AG04450 (cell line): ENCODE measurements at regions of chr1 and their contacts with region 1.

Region 1: GRCh38 chr1:236603991-236604904 is at the start of gene HEATR1:
- DNase-seq: peak; percentile 91
- H3K4me3 ChIP-seq: peak within 1 kb of the TSS; percentile 98
- H3K27ac ChIP-seq: peak within 1 kb of the TSS; percentile 47
- H3K27me3 ChIP-seq: no peaks in the 10 kb centered on the region
- CTCF ChIP-seq: no peak
- polyA plus RNA-seq, gene HEATR1: 19.3 and 24.9 TPM in 2 replicates

Region 2: DNA sequence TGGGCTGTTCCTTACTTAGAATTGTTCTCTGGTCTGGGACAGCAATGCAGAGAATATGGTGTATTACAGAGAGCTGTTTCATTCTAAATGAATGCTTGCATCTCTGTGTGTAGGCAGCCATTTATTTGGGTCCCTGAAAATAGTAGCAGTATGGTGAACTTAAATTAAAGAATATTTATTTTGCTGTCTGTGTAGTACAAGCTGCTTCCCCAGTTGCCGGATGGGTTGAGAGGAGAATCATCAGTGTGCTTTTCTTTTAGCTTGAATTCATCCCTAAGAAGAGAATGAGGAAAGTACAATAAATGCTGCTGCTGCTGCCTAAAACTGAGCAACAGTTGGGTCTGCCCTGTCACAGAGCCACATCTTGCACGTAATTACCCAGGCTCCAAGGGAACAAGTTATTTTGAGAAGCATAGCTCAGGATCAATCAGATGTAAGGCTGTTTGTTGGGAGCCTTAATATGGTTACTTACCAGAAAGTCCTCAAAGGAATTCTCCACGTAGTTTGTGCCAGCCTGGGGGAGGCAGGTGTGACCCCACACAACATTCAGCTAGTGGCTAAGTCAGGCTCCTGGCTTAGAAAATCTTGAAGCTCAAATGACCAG is 98.6 kb after region 1 on chr1:
- CTCF ChIA-PET with region 1: no interaction called
- POLR2A ChIA-PET with region 1: no interaction called
- DNase-seq: no peak
- H3K4me3 ChIP-seq: no peak overlapping the region
- H3K27ac ChIP-seq: no peak overlapping the region
- H3K27me3 ChIP-seq: no peaks in the 10 kb centered on the region
- CTCF ChIP-seq: no peak

Region 3: DNA sequence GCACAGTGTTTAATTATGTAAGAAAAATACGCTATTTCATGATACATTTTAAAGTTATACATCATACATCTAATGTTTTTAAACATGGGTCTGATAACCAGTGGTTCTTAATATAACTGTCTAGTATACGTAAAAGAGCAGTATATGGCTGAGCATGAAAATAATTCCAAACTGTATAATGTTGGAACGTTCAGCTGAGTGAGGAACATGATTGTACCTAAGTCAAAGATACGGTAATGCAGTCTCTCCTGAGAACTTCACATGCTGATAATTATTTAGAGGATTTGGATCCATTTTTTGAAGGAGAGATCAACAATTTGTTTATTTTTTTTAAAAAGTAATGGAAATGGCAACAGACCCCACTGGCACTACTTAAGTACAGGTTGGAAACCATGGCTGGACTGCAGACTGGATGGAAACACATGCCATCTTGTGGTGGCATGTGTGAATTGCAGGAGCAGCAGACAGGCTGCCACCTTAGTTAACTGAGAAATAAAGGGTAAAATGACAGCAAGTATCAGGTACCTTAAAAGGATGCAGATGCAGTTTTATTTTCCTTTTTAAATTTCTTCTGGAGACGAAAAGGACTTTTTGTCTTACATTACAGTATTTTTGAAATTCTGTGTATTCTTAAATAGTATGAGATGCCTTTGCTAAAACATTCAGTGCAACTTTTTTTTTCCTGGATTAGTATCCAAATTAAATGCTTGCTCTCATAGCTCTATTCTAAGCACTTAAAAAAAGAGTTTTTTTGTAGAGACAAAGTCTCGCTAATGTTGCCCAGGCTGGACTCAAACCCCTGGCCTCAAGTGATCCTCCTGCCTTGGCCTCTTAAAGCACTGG is 264.6 kb after region 1 on chr1:
- CTCF ChIA-PET with region 1: interaction called, 12 read pairs
- POLR2A ChIA-PET with region 1: no interaction called
- DNase-seq: peak; percentile 45
- H3K4me3 ChIP-seq: no peak overlapping the region
- H3K27ac ChIP-seq: no peak overlapping the region
- H3K27me3 ChIP-seq: no peaks in the 10 kb centered on the region
- CTCF ChIP-seq: peak; percentile 98

Region 4: DNA sequence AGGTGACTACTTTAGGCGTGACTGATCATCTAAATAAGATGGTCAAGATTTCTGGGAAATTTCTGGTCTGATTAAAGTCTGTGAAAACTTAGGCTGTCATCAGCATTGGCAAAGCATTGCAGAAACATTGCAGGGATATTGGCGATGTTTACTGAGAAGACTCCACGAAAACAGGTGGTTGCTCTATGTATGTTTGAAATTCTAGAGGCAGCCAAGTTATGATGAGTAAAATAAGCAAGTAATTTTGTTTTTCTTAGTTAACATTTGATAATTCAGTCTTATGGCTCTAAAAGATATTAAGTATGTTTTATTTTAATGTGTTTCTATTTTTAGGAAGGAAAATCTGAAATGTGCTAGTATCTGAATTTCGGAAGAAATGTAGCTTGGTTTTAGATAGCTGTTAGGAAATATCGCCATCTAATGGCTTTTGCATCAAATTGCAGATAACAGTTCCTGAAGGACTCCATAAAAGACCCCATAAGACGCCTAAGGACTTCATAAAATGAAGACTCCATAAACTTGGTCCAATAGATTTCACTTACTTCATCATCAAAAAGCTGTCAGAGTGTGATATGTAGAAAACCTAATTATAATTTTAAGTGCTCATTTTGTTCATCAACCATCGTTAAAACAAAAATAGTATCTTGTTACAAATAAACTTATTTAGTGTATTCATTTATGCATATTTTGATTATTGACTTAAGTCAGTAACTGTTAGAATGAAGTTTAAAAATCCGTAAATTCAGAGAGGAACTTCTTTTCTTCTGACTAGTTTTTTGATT is 782.3 kb after region 1 on chr1:
- CTCF ChIA-PET with region 1: interaction called, 55 read pairs
- POLR2A ChIA-PET with region 1: no interaction called
- DNase-seq: no peak
- H3K4me3 ChIP-seq: no peak overlapping the region
- H3K27ac ChIP-seq: no peak overlapping the region
- H3K27me3 ChIP-seq: no peaks in the 10 kb centered on the region
- CTCF ChIP-seq: peak; percentile 75

Region 5: DNA sequence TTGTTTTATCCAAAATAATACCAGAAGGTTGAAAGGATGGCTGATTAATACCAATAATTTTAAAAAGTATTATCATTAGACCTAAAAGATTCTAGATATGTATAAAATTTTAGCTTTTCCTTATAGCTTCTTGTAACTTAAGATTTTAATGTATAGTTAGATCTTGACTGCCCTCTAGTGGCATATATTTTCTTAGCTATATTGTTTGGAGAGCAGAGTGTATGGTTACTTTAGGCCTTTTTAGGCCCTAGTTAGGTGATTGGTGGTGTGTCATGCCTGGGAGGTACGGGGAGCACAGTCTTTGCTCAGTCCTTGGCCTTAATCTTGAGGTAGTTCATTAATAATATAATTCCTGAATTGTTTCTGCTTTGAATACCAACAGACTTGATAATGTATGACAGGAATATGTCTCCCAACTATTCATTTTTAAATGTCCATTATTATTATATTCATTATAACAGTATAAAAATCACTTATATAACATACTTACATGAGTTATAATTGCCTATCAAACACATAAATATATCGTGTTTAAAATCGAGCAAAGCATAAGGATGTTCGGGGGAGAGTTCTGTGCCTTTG is 958.1 kb after region 1 on chr1:
- CTCF ChIA-PET with region 1: interaction called, 38 read pairs
- POLR2A ChIA-PET with region 1: no interaction called
- DNase-seq: peak; percentile 3
- H3K4me3 ChIP-seq: no peak overlapping the region
- H3K27ac ChIP-seq: no peak overlapping the region
- H3K27me3 ChIP-seq: no peaks in the 10 kb centered on the region
- CTCF ChIP-seq: peak; percentile 58